Gastrocnemius medialis (tissue), 4 donors: ENCODE measurements at regions of chr20 and their contacts with region 1.

Region 1: GRCh38 chr20:543369-544152 is at the start of gene CSNK2A1:
- DNase-seq: peak; percentile 86 to 93
- ATAC-seq: peak; percentile 97
- H3K4me3 ChIP-seq: peak within 1 kb of the TSS; percentile 77 to 100 (median 95)
- H3K27ac ChIP-seq: peak within 1 kb of the TSS; percentile 88 to 99 (median 96)
- H3K4me1 ChIP-seq: peaks cover 29 to 33% of the 10 kb centered on the region in 2 donors
- H3K27me3 ChIP-seq: no peaks in the 10 kb centered on the region
- CTCF ChIP-seq: no peak
- POLR2A ChIP-seq: peak; percentile 86 to 90
- total RNA-seq, gene CSNK2A1: 108 to 180 (median 157) TPM

Region 2: DNA sequence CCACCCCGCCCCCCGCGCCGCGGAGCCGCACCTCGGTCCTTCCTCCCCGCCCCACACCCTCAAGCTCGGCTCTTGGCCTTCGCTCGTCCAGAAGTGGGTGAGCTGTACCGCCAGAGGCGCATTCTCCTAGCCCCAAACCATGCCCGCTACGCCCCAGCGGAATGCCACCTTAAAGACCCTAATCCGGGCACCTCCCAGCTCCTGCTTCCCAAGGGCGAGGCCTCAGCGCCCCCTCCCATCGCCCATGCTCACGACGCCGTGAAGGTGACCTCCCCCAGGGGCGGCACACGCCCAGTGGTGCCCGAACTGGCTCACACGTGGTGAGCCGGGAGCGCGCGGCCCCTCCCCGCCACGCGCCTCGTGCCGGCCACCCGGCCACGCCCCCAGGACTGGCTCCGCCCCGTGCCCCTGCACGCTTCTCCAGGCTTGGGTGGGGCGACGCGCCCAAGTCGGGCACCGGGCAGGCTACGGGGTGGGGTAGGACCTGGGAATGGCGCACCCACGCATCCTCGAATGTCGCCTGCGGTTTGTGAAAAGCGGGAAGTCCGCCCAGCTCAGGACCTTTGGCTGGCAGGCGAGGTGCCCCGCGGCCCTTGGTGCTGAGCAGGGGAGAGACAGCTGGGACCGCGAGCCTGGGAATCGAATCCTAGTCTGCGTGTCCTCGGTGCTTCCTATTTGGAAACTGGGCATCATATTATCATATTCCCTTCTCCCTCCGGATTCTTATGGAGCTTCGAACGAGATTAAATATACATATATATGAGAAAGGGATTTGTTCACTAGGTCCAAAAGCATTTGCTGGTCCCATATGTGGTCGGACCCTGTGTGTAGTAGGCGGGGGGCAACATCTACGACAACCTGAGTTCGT is 219.2 kb before region 1 on chr20:
- in situ Hi-C with region 1: no loop called
- intact Hi-C with region 1: loop called (anchors 1 kb)
- DNase-seq: peak; percentile 80 to 87
- ATAC-seq: peak; percentile 77 to 80
- H3K4me3 ChIP-seq: peak overlapping the region; percentile 67 to 73 (median 70)
- H3K27ac ChIP-seq: peak overlapping the region; percentile 80 to 93 (median 86)
- H3K4me1 ChIP-seq: peaks cover 5% of the 10 kb centered on the region in 2 donors
- H3K27me3 ChIP-seq: peaks cover 0 to 7% (median 2%) of the 10 kb centered on the region in 3 donors
- CTCF ChIP-seq: peak in 3 of 5 experiments; percentile 16 to 42 (median 25)
- POLR2A ChIP-seq: peak; percentile 83 to 84

Region 3: DNA sequence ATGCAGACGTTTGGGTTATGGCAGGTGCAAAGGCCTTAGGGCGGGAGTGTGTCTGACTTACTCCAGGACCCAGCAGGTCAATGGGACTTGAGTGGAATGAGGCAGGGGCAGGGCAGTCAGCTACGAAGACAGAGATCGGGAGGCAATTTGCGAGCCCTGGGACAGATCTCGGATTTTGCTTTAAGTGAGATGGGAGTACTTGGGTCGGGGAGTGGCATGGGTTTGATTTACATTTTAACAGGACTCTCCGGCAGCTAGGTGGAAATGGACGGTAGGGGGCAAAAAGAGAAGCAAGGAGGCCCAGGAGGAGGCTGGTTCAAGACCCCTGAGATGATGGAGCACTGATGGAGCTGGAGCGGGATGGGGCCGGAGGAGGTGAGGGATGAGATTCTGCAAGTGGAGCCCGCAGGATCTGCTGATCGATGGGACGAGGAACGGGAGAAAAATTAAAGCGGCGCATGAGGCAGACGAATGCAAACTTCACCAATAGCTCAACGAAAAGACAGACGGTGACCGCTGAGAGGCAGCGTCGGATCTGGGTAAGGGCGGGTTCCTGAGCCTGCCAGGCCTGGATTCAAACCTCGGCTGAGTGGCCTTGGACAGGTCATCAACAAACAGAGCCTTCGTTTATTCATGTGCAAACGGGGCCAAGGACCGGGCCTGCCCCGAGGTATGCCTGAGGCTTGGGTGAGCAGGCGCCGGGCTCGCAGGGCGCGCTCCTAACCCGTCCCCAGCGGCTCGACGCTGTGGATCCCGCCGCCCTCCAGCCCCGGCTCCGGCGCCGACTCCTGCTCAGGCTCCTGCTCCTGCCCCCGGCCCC is 136.2 kb before region 1 on chr20:
- in situ Hi-C with region 1: no loop called
- intact Hi-C with region 1: loop called (anchors 5 kb)
- DNase-seq: peak; percentile 57 to 73
- ATAC-seq: peak; percentile 71 to 77
- H3K4me3 ChIP-seq: peak overlapping the region; percentile 63 to 94 (median 80)
- H3K27ac ChIP-seq: peak overlapping the region; percentile 95 to 98 (median 97)
- H3K4me1 ChIP-seq: peaks cover 25 to 26% of the 10 kb centered on the region in 2 donors
- H3K27me3 ChIP-seq: no peaks in the 10 kb centered on the region
- CTCF ChIP-seq: peak in 3 of 5 experiments; percentile 25 to 36 (median 28)
- POLR2A ChIP-seq: no peak

Region 4: GRCh38 chr20:462199-462991 is 81.2 kb before region 1 on chr20 and contains the start of gene TBC1D20:
- in situ Hi-C with region 1: no loop called
- intact Hi-C with region 1: loop called (anchors 2 kb)
- DNase-seq: peak; percentile 64 to 81
- ATAC-seq: peak; percentile 95 to 97
- H3K4me3 ChIP-seq: peak within 1 kb of the TSS; percentile 63 to 92 (median 82)
- H3K27ac ChIP-seq: peak within 1 kb of the TSS; percentile 79 to 96 (median 92)
- H3K4me1 ChIP-seq: peaks cover 32 to 40% of the 10 kb centered on the region in 2 donors
- H3K27me3 ChIP-seq: no peaks in the 10 kb centered on the region
- CTCF ChIP-seq: peak in 2 of 5 experiments; percentile 29 to 32
- POLR2A ChIP-seq: peak; percentile 92 to 94
- total RNA-seq, gene TBC1D20: 28.9 to 39.0 (median 34.0) TPM

Region 5: DNA sequence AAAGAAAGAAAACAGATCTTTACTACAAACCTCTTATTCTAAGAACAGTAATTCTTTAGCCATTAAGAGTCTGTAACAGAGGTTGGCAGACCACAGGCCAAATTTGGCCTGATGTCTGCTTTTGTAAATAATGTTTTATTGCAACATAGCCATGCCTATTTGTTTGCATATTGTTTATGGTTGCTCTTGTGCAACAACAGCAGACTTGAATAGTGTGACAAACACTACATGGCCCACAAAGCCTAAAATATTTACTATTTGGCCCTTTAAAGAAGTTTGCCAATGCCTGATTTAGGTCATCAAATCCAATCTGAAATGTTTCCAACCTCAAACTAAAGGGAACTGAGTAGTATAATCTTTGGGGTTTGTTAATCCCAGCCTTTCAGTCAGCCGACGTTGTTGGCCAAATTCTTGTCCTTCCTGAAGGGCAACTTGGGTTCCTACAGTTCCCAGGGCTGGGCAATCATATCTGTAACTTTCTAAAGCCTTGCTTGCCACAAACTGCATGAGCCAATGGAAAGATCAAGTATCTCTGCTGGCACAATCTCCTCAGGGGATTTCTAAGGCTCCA is 47.4 kb before region 1 on chr20:
- in situ Hi-C with region 1: no loop called
- intact Hi-C with region 1: loop called (anchors 2 kb)
- DNase-seq: peak; percentile 71 to 82
- ATAC-seq: peak; percentile 99 to 100
- H3K4me3 ChIP-seq: no peak overlapping the region
- H3K27ac ChIP-seq: peak overlapping the region; percentile 78 to 81 (median 80)
- H3K4me1 ChIP-seq: peaks cover 14 to 23% of the 10 kb centered on the region in 2 donors
- H3K27me3 ChIP-seq: no peaks in the 10 kb centered on the region
- CTCF ChIP-seq: no peak
- POLR2A ChIP-seq: no peak

Region 6: DNA sequence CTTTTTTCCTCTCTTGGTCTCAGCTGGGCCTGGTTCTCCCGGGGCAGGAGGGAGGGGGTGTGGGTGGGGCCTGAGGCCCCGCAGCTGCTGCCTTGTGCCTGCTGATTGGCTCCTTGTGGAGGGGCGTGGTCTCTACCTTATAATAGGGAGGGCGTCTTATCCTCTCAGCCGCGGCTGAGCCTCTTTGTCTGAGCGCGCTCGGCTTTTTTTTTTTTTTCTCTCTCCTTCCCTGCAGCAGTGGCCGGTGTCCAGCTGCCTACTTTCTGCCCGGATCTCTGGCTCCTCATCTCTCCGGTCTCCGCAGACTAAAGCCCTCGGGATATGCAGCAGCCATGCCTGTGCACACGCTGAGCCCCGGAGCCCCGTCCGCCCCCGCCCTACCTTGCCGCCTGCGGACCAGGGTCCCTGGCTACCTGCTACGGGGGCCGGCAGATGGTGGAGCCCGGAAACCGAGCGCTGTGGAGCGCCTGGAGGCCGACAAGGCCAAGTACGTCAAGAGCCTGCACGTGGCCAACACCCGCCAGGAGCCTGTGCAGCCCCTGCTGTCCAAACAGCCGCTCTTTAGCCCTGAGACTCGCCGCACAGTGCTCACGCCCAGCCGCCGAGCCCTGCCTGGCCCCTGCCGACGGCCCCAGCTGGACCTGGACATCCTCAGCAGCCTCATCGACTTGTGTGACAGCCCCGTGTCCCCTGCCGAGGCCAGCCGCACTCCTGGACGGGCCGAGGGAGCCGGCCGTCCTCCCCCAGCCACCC is 301.1 kb after region 1 on chr20:
- in situ Hi-C with region 1: no loop called
- intact Hi-C with region 1: loop called (anchors 5 kb)
- DNase-seq: peak; percentile 85 to 89
- ATAC-seq: peak; percentile 99 to 100
- H3K4me3 ChIP-seq: peak overlapping the region; percentile 52 to 63 (median 54)
- H3K27ac ChIP-seq: peak overlapping the region in 1 of 4 donors; percentile 59
- H3K4me1 ChIP-seq: peaks cover 8 to 12% of the 10 kb centered on the region in 2 donors
- H3K27me3 ChIP-seq: peaks cover 0 to 2% (median 0%) of the 10 kb centered on the region in 3 donors
- CTCF ChIP-seq: no peak
- POLR2A ChIP-seq: no peak